Gastrocnemius medialis (tissue), 4 donors: ENCODE measurements at regions of chr2 and their contacts with region 1.

Region 1: DNA sequence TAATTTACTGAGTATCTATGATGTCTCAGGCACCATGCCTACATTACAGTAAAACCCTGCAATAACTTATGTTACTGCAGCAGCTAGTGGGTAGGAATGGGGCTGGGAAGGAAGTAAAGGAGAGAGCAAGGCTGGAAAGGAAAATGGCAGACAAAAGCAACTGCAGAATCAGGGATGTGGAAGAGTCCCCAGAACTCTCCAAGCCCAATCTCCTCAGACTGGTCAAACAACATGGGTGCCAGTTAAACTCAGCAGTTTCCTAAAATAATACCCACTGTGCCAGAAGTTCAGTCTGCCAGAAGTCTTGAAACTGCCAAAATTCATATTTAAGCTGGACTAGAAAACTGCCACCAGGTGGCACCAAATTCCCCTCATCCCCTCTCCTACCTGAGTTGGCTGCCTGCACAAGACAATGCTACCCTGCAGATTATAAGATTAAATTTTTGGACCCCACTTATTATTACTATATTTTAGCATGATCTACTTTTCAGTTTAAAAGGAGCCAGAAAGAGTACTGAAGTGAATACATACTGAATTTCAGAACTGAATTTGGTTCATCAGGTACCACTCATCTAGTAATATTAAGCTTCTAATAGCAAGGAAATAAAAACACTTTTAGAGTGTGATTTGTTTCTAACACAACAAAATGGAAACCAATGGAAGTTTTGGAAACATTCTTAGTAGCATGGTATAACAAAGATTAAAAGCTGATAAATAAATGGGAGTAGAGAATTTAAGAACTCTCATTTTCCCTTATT is 86.8 kb upstream of the DNER start:
- DNase-seq: peak; percentile 11 to 45
- ATAC-seq: peak; percentile 48 to 79
- H3K4me3 ChIP-seq: no peak overlapping the region
- H3K27ac ChIP-seq: peak overlapping the region in 1 of 4 donors; percentile 26
- H3K4me1 ChIP-seq: peaks cover 0 to 16% of the 10 kb centered on the region in 2 donors
- H3K27me3 ChIP-seq: no peaks in the 10 kb centered on the region
- CTCF ChIP-seq: peak; percentile 44 to 76 (median 61)
- POLR2A ChIP-seq: no peak

Region 2: DNA sequence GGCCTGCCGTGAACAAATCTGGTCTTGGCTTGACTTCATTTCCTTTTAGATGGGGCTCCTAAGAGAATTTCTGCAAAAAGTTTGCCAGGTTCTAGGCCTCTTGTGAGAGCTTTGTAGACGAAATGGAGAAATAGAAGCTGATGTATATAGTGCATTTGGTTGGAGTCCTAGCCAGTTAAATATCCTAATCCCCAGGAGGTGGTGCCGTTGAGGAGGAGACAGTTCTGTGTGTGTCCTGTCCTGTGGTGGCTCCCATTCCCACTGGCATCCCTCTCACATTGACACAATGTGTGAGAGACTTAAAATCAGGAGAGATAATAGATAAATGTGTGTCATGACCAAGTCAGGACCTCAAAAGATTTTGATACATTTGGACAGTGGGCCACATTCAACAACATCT is 52.2 kb before region 1 on chr2:
- in situ Hi-C with region 1: no loop called
- intact Hi-C with region 1: no loop called
- DNase-seq: no peak
- ATAC-seq: no peak
- H3K4me3 ChIP-seq: no peak overlapping the region
- H3K27ac ChIP-seq: no peak overlapping the region
- H3K4me1 ChIP-seq: no peaks in the 10 kb centered on the region
- H3K27me3 ChIP-seq: peaks cover 0 to 3% (median 0%) of the 10 kb centered on the region in 3 donors
- CTCF ChIP-seq: no peak
- POLR2A ChIP-seq: no peak

Region 3: GRCh38 chr2:229901819-229902218 is 100.6 kb after region 1 on chr2:
- in situ Hi-C with region 1: loop called in 1 of 4 experiments (anchors 10 kb)
- intact Hi-C with region 1: no loop called
- DNase-seq: no peak
- ATAC-seq: peak in 1 of 2 donors; percentile 58
- H3K4me3 ChIP-seq: no peak overlapping the region
- H3K27ac ChIP-seq: peak overlapping the region in 1 of 4 donors; percentile 11
- H3K4me1 ChIP-seq: peaks cover 39 to 42% of the 10 kb centered on the region in 2 donors
- H3K27me3 ChIP-seq: no peaks in the 10 kb centered on the region
- CTCF ChIP-seq: no peak
- POLR2A ChIP-seq: no peak

Region 4: GRCh38 chr2:229910832-229911412 is 109.7 kb after region 1 on chr2:
- in situ Hi-C with region 1: loop called in 3 of 4 experiments (anchors 10 kb)
- intact Hi-C with region 1: no loop called
- DNase-seq: no peak
- ATAC-seq: peak in 1 of 2 donors; percentile 70
- H3K4me3 ChIP-seq: no peak overlapping the region
- H3K27ac ChIP-seq: peak overlapping the region; percentile 4 to 47 (median 21)
- H3K4me1 ChIP-seq: peaks cover 73 to 74% of the 10 kb centered on the region in 2 donors
- H3K27me3 ChIP-seq: no peaks in the 10 kb centered on the region
- CTCF ChIP-seq: peak in 2 of 5 experiments; percentile 12 to 39
- POLR2A ChIP-seq: no peak

Region 5: GRCh38 chr2:229921892-229922445 is 120.8 kb after region 1 on chr2 and contains the start of gene TRIP12:
- in situ Hi-C with region 1: loop called in 2 of 4 experiments (anchors 10 kb)
- intact Hi-C with region 1: loop called (anchors 2 kb)
- DNase-seq: peak; percentile 92
- ATAC-seq: peak; percentile 88 to 92
- H3K4me3 ChIP-seq: peak within 1 kb of the TSS; percentile 73 to 99 (median 92)
- H3K27ac ChIP-seq: peak within 1 kb of the TSS; percentile 97 to 100 (median 100)
- H3K4me1 ChIP-seq: peaks cover 28 to 31% of the 10 kb centered on the region in 2 donors
- H3K27me3 ChIP-seq: no peaks in the 10 kb centered on the region
- CTCF ChIP-seq: no peak
- POLR2A ChIP-seq: peak; percentile 46 to 49
- total RNA-seq, gene TRIP12: 122 to 152 (median 141) TPM

Region 6: GRCh38 chr2:231056453-231057424 is 1255.6 kb after region 1 on chr2 and contains the start of gene PSMD1:
- in situ Hi-C with region 1: loop called in 1 of 4 experiments (anchors 25 kb)
- intact Hi-C with region 1: no loop called
- DNase-seq: peak; percentile 86 to 90
- ATAC-seq: peak; percentile 91 to 92
- H3K4me3 ChIP-seq: peak within 1 kb of the TSS; percentile 94 to 98 (median 96)
- H3K27ac ChIP-seq: peak within 1 kb of the TSS; percentile 93 to 96 (median 94)
- H3K4me1 ChIP-seq: peaks cover 41 to 49% of the 10 kb centered on the region in 2 donors
- H3K27me3 ChIP-seq: no peaks in the 10 kb centered on the region
- CTCF ChIP-seq: peak; percentile 88 to 96 (median 95)
- POLR2A ChIP-seq: peak; percentile 68 to 70
- total RNA-seq, gene PSMD1: 169 to 189 (median 182) TPM